Transverse colon (tissue), 4 donors: ENCODE measurements at regions of chr3 and their contacts with region 1.

Region 1: DNA sequence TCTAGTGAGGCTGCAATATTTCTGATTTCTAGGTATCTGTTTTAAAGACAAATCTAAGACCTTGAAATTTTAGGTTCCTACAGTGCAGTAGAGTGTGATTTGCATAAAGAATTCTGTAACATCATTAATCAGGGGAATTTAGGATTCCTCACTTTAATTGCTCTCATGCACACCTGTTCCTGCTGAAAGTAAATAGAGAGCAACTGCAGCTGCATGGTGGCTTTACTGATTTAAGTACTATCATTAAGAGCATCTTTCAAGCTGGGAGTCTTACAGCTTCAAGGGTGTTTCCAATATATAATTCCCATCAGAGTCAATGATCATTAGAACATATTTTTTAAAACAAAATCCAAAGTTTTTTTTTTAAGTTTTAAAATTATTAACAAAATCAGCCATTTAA is 36.0 kb upstream of the C3orf70 start:
- DNase-seq: no peak
- H3K4me3 ChIP-seq: no peak overlapping the region
- H3K27ac ChIP-seq: no peak overlapping the region
- H3K4me1 ChIP-seq: no peaks in the 10 kb centered on the region
- H3K27me3 ChIP-seq: no peaks in the 10 kb centered on the region
- CTCF ChIP-seq: no peak
- EP300 ChIP-seq: no peak
- POLR2A ChIP-seq: no peak

Region 2: DNA sequence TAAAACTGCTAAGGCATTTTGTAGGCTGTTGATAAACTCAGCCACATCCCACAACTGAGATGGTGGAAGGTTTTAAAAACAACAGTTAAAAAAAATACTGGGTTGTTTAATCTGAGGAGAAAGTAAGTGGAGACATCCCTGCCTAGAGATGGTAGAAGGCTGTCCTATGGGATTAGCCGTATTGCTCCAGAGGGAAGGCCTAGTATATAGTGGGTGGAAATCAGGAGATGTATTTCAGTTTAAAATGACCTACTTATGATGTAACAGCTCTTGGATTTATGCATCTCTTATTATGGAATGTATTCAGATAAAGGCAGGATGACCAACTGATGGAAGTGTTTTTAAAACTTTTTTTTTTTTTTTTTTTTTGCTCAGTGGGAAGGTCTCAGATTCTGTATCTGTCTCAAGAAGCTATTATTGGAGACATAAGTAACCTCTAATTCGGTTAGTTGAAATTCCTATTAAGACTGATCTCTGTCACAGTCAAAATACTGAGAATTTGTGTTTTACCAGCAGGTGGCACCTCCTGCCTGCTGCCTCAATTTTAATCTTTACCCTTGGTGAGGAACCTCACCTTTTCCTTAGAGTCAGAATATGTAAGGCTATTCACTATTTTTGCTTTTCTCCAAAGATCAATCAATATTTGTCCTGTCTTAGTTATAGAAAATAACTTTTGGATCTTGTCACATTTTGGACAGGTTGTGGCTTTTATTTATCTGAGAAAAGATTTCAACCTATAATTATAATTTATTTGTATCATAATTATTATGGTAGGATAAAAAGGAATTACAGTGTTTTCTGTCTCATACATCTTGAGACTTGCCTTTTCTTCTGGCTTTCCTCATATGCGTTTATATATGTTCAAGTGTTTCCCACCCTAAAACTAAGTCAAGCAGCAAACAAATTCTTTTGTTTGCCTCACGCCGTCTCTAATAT is 313.8 kb before region 1 on chr3:
- in situ Hi-C with region 1: loop called (anchors 10 to 25 kb)
- intact Hi-C with region 1: no loop called
- DNase-seq: peak; percentile 11
- H3K4me3 ChIP-seq: no peak overlapping the region
- H3K27ac ChIP-seq: no peak overlapping the region
- H3K4me1 ChIP-seq: no peaks in the 10 kb centered on the region
- H3K27me3 ChIP-seq: no peaks in the 10 kb centered on the region
- CTCF ChIP-seq: peak; percentile 48 to 67 (median 56)
- EP300 ChIP-seq: no peak
- POLR2A ChIP-seq: no peak

Region 3: DNA sequence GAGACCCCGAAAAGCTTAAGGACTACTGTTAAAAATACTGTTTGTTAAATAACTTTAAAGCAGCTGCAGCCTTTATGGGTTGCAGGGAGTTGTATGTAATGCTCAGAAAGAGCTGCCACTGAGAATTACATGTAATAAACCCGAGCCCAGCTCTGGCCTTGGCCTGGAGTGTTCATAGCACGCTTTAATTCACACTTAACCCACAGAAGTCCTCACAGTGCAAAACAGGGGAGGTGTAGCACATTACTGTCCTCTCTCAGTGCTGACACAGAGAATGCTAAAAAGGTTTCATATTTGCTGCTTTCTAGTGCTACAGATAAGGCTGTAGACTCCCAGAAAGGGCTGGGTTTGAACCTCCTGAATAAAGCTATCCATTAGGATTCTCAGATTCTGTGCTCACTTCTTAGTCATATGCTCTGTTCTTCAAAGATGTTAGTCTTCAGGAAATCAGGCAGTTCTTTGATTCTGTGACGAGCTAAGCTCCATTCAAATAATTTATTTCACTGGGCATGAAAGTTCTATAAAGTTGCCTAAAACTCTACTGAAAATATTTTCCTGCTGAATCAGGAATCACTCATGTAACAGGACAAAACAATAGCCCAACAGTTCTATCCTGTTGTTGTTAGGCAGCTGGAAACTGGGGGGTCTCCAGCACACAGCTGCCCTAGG is 505.3 kb after region 1 on chr3:
- in situ Hi-C with region 1: no loop called
- intact Hi-C with region 1: no loop called
- DNase-seq: no peak
- H3K4me3 ChIP-seq: no peak overlapping the region
- H3K27ac ChIP-seq: peak overlapping the region in 1 of 4 donors; percentile 11
- H3K4me1 ChIP-seq: peaks cover 0 to 22% (median 4%) of the 10 kb centered on the region in 4 donors
- H3K27me3 ChIP-seq: no peaks in the 10 kb centered on the region
- CTCF ChIP-seq: no peak
- EP300 ChIP-seq: no peak
- POLR2A ChIP-seq: no peak